Ascending aorta (tissue), 2 donors: ENCODE measurements at regions of chr11 and their contacts with region 1.

Region 1: DNA sequence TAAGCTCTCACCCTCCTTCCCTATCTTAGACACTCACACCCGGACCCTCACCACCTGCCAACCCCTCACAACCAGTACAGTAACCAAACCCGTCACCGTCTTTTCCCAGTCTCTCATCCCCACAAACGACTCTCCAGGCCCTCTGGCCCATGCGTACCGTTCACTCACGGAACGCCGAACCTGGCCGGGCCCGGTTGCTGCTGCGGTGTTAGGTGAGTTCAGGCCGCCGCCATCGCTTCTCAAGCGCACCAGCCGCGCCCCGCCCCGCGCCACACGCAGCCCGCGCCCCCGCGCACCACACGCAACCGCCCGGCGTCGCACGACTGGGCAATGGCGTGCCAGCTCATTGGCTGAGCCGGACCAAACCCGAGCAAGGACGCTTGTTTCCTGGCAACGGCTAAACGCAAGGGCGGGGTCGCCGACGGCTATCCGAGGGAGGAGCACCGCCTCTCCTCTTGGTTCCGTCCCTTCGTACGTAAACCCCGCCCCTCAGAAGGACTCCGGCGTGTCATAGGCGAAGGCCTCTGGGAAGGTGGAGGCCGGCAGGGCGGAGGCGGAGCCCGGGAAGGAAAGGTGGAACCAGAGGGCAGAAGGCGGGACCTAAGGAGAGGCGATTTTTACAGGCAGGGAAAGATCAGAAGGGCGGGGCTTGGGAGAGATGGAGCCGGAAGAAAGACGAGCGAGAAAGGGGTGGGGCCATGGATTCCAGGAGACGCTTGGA is at the start of gene FHIP1B:
- DNase-seq: peak; percentile 100
- H3K4me3 ChIP-seq: peak within 1 kb of the TSS; percentile 54 to 79
- H3K27ac ChIP-seq: peak within 1 kb of the TSS; percentile 78 to 83
- H3K4me1 ChIP-seq: peaks cover 0 to 12% of the 10 kb centered on the region in 2 donors
- H3K27me3 ChIP-seq: no peaks in the 10 kb centered on the region
- CTCF ChIP-seq: peak in 1 of 3 experiments; percentile 5
- total RNA-seq, gene FHIP1B: 31.9 TPM

Region 2: GRCh38 chr11:4607781-4608666 is 1626.5 kb before region 1 on chr11 and contains the start of gene TRIM68:
- intact Hi-C with region 1: loop called (anchors 5 kb)
- DNase-seq: peak; percentile 86 to 98
- H3K4me3 ChIP-seq: peak within 1 kb of the TSS; percentile 70 to 88
- H3K27ac ChIP-seq: peak within 1 kb of the TSS; percentile 94 to 95
- H3K4me1 ChIP-seq: peaks cover 0 to 10% of the 10 kb centered on the region in 2 donors
- H3K27me3 ChIP-seq: no peaks in the 10 kb centered on the region
- CTCF ChIP-seq: no peak
- total RNA-seq, gene TRIM68: 18.6 TPM

Region 3: GRCh38 chr11:6132431-6132830 is 102.1 kb before region 1 on chr11:
- intact Hi-C with region 1: no loop called
- DNase-seq: no peak
- H3K4me3 ChIP-seq: no peak overlapping the region
- H3K27ac ChIP-seq: no peak overlapping the region
- H3K4me1 ChIP-seq: no peaks in the 10 kb centered on the region
- H3K27me3 ChIP-seq: no peaks in the 10 kb centered on the region
- CTCF ChIP-seq: no peak

Region 4: DNA sequence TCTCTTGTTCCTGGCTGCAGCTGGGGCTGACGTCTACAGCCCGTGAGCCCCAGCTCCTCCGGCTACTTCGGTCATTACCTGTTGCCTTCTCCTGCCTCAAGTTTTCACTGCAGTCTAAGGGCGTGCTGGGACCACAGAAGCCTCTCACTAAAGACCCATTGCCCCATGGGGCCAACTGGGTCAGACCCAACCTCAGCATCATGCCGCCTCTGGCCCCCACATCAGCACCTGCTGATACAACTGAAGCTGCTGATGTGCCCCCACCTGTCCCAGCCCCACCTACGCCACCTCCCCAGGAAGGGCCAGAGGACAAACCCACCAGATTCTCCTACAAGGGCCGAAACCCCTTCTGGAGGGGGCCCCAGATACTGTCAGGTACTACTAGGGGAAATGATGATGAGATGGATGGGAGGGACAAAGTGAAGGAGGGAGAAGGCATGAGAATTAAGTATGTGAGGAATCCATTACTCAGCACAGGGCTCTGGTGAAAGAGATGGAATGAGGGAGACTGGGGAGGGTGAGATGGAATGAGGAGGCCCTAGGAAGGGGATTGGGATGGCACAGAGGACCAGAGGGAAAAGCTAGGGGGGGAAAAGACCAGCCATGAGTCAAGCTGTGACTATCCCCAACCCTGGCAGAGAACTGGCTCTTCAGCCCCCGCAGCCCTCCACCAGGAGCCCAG is 24.1 kb before region 1 on chr11:
- intact Hi-C with region 1: no loop called
- DNase-seq: no peak
- H3K4me3 ChIP-seq: no peak overlapping the region
- H3K27ac ChIP-seq: no peak overlapping the region
- H3K4me1 ChIP-seq: no peaks in the 10 kb centered on the region
- H3K27me3 ChIP-seq: no peaks in the 10 kb centered on the region
- CTCF ChIP-seq: no peak

Region 5: GRCh38 chr11:6315811-6316425 is 81.4 kb after region 1 on chr11:
- intact Hi-C with region 1: loop called (anchors 1 kb)
- DNase-seq: peak in 1 of 2 donors; percentile 75
- H3K4me3 ChIP-seq: peak overlapping the region; percentile 26 to 28
- H3K27ac ChIP-seq: peak overlapping the region; percentile 98 to 99
- H3K4me1 ChIP-seq: peaks cover 12 to 23% of the 10 kb centered on the region in 2 donors
- H3K27me3 ChIP-seq: no peaks in the 10 kb centered on the region
- CTCF ChIP-seq: peak; percentile 73 to 89 (median 85)

Region 6: GRCh38 chr11:6362873-6363678 is 128.5 kb after region 1 on chr11:
- intact Hi-C with region 1: loop called (anchors 2 kb)
- DNase-seq: peak; percentile 47 to 93
- H3K4me3 ChIP-seq: peak overlapping the region in 1 of 2 donors; percentile 7
- H3K27ac ChIP-seq: peak overlapping the region; percentile 88 to 92
- H3K4me1 ChIP-seq: peaks cover 9 to 18% of the 10 kb centered on the region in 2 donors
- H3K27me3 ChIP-seq: no peaks in the 10 kb centered on the region
- CTCF ChIP-seq: peak; percentile 80 to 93 (median 87)

Region 7: DNA sequence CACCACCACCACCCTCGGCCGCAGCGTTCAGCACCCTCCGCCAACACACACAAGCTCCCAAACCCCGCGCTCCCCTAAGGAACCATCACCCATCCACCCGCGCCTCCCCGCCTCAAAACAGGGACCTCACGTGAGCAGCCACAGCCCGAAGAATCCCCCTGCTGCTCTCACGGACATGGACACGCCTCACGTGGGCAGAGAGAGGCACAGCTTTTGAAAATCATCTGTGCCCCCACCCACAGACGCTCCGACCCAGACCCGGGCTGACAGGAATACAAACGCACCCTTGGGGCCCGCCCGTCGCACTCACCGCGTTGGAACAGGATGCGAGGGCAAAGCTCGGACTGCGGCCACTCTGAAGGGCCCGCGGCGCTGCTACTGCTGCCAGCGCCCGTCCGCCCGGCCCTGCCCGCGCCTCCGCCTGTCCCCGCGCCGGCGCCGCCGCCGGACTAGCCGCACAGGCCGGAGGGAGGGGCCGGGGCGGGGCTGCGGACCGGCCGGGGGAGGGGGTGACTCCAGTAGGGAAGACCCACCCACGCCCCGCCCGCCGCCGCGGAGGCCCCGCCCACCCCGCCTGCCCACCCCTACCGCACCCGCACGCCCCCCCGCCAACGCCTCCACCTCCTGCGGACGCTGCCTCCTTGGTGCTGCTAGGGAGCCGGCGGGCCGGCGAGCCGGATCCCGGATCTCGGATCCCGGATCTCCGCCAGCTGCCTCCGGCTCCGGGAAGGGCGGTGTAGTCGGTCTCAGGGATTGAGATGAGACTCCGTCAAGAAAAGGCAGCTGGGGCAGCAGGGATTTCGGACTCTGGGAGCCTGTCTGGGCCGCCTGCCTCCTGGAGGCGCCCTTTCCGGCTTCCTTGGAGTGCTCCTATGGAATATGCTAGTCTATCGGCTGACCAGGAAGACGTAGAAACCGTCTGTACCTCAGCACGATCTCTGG is 239.2 kb after region 1 on chr11 and contains the start of gene TRIM3:
- intact Hi-C with region 1: loop called (anchors 1 kb)
- DNase-seq: peak; percentile 74 to 96
- H3K4me3 ChIP-seq: peak within 1 kb of the TSS; percentile 85 to 88
- H3K27ac ChIP-seq: peak within 1 kb of the TSS; percentile 94 to 96
- H3K4me1 ChIP-seq: peaks cover 7 to 24% of the 10 kb centered on the region in 2 donors
- H3K27me3 ChIP-seq: no peaks in the 10 kb centered on the region
- CTCF ChIP-seq: peak in 2 of 3 experiments; percentile 22 to 39
- total RNA-seq, gene TRIM3: 33.8 TPM

Region 8: DNA sequence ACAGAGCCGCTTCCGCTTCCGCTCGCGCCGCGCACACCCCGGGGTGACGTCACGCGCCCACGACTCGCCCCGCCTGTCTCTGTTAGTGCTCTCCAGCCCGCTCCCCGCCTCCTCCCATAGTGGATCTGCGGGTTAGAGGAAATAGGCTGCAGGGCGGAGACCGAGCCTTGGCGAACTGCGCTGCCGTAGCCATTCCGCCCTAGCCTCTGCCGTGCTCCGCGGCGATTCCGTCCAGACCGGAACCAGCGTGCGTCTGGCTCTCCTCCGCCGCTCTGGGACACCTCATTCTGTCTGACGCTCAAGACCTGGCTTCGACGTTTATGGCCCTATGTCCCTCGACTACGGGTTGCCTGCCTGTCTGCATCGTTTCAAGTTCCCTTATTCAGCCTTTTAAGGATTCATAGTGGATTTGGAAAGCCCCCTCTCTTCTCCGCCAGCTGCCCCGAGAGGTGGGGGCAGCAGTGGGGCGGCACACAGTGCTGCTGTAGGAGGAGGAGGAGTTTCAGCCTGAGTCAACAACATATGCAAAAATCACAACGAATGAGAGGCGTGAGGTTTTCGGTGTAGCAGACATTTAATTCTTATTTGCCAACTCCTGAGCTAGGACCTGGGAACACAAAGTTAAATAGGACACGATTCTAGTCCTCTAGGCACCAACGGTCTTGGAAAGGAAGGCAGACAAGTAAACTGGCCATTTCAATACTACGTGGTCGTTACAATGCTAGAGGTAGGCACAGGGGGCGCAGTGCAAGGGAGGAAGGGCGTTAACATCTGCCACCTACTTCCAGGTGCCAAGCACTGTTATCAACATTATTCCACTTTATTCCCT is 377.9 kb after region 1 on chr11 and contains the start of gene TAF10:
- intact Hi-C with region 1: loop called (anchors 5 kb)
- DNase-seq: peak; percentile 95 to 99
- H3K4me3 ChIP-seq: peak within 1 kb of the TSS; percentile 76 to 95
- H3K27ac ChIP-seq: peak within 1 kb of the TSS; percentile 95 to 97
- H3K4me1 ChIP-seq: peaks cover 18 to 37% of the 10 kb centered on the region in 2 donors
- H3K27me3 ChIP-seq: no peaks in the 10 kb centered on the region
- CTCF ChIP-seq: peak in 2 of 3 experiments; percentile 43 to 47
- total RNA-seq, gene TAF10: 76.0 TPM